ENCODE measurements at regions of chr9 and their contacts with region 1.

Region 1: DNA sequence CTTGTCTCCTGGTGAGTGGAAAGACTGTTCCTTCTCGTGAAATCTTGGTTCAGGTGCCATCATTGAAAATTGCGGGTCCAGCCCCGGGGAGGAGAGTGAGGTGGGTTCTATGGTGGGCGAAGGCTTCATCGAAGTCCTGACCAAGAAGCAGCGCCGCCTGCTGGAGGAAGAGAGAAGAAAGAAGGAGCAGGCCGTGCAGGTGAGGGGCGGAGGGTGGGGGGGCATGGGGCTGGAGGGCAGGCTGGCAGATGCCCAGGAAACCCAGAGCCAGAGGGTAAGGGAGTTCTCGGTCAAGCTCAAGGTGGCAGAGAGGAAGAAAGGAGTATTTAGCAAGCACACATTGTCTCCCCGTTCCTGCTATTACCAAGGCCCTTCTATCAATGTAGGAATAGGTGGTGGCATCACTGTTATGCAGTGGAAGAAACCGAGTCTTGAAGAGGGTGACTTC is 24.3 kb upstream of the POMT1 start:
- DNase-seq: no peak
- H3K4me3 ChIP-seq: no peak overlapping the region
- H3K27ac ChIP-seq: no peak overlapping the region
- H3K4me1 ChIP-seq: no peaks in the 10 kb centered on the region
- H3K27me3 ChIP-seq: no peaks in the 10 kb centered on the region
- CTCF ChIP-seq: peak; percentile 45 to 55

Region 2: DNA sequence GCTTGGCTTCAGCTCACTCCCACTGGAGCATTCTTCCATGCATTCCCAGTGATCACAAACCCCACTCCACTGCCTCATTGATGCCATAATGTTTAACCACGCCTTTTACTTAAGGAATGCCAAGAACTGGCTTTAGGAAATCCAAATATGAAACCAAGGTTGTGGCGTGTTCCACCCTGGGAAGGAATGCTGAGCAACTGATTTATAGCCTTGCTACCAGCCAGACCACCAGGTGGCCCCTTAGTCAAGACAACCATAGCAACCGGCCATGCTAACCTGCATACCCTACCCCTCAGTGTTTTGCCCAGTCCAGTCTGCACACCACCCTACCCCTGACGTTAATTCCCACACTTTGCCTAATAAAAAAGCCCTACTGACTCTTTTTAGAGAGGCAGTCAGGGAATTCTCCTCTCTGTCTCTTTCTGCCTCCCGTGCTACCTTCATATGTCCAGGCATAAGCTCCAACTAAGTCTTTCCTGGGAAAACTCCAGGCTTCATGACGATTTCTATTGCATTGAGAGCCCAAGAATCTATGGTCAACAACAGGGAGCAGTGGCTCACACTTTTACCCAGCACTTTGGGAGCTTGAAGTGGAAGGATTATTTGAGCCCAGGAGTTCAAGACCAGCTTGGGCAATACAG is 111.6 kb before region 1 on chr9:
- CTCF ChIA-PET with region 1: no interaction called
- dilution Hi-C with region 1: no loop called
- in situ Hi-C with region 1: no loop called
- intact Hi-C with region 1: loop called (anchors 5 kb)
- DNase-seq: peak; percentile 41
- H3K4me3 ChIP-seq: no peak overlapping the region
- H3K27ac ChIP-seq: peak overlapping the region; percentile 23
- H3K4me1 ChIP-seq: peaks cover 9% of the 10 kb centered on the region
- H3K27me3 ChIP-seq: no peaks in the 10 kb centered on the region
- CTCF ChIP-seq: peak; percentile 26 to 31

Region 3: DNA sequence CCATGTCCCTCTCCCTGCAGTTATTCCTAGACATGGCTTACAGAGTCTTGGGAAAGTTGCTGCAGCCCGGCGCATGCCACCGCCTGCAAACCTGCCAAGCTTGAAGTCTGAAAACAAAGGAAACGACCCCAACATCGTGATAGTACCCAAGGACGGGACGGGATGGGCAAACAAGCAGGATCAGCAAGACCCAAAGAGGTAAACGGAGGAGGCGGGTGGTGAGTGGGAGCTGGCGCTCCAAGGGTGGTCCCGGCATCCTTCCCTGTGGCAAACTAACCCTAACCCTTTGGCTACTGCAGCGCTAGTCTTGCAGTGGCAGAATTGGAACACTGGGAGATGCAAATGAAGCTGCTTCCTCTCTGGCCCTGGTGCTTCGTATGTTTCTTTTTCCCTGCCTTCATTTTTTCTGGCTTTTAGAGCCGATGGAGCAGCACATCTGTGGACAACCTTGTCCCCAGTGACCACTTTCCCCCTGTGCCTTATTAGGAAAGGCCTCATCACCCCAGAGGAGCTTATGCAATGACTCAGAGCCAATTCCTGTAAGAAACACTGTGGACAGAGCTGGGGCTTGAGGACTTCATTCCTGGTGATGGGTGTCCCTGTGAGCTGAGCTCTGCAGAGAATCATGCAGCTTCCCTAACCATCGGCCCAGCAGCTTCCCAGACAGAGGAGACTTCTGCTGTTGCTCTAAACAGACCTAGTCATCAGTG is 45.7 kb before region 1 on chr9:
- CTCF ChIA-PET with region 1: no interaction called
- dilution Hi-C with region 1: no loop called
- in situ Hi-C with region 1: no loop called
- intact Hi-C with region 1: loop called (anchors 5 kb)
- DNase-seq: peak; percentile 51
- H3K4me3 ChIP-seq: no peak overlapping the region
- H3K27ac ChIP-seq: no peak overlapping the region
- H3K4me1 ChIP-seq: peaks cover 25% of the 10 kb centered on the region
- H3K27me3 ChIP-seq: no peaks in the 10 kb centered on the region
- CTCF ChIP-seq: no peak

Region 4: DNA sequence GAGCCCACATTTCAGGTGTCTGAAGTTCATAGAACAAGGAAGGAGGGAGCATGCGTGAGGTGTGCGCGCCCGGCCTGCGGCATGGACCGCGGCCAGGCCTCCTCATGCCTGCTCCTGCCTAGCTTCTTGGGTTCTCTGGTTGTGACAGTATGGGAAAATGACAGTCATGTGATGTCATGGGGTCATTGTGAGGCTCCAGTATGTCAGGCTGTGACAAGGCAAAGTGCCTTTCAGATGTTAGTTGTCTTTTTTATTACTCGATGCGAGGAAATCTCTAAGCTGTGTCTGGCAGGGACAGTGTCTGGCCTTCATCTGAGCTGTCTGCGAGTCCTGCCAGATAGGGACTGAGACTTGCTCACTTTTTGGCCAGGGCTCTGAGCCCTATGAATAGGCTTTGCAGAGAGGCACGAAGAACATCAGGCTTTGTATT is 39.3 kb after region 1 on chr9:
- CTCF ChIA-PET with region 1: no interaction called
- dilution Hi-C with region 1: loop called (anchors 5 kb)
- in situ Hi-C with region 1: no loop called
- intact Hi-C with region 1: no loop called
- DNase-seq: no peak
- H3K4me3 ChIP-seq: no peak overlapping the region
- H3K27ac ChIP-seq: no peak overlapping the region
- H3K4me1 ChIP-seq: no peaks in the 10 kb centered on the region
- H3K27me3 ChIP-seq: no peaks in the 10 kb centered on the region
- CTCF ChIP-seq: no peak

Measured in mammary epithelial cell (primary cell).